Endothelial cell of umbilical vein (primary cell): ENCODE measurements at regions of chr1 and their contacts with region 1.

Region 1: DNA sequence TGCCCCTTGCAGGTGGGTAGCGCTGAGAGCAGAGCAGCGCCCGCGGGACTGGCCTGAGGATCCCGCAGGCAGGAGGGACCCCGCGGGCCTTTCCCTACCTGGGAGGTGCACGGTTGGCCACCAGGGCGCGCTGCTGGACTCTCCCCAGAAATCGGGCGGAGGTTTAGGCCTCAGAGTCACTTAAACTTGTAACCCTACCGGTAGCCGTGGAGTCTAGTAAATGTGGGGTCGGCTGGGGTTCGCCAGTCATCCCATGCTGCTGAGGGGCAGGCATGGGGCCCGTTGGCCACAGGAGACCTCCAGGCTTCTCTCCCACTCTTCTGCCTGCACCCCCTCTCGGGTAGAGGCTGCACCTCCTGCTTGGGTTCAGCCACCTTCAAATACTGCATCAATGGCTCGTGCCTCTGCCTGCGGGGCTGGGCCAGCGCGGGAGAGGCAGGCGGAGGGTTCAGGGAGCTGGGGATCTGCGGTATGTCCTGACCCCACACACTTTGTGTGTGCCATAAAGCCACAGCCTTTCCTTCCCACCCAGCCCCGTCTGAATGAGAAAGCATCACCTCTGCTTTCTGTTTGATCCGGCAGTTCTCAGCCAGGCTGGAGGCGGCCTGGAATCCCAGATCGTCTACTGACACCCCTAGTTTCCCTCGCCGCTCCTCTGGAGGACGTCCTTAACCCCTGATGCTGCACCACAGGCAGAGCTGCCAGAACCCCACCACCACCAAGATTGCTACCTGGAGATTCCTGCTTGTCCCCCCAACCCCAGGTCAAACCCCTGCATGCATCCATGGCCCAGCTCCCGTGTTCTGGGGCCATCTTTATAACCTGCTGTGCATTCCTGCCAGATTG is 12.3 kb upstream of the GSTM4 start:
- DNase-seq: peak; percentile 63
- H3K4me3 ChIP-seq: no peak overlapping the region
- H3K27ac ChIP-seq: no peak overlapping the region
- H3K4me1 ChIP-seq: no peaks in the 10 kb centered on the region
- H3K27me3 ChIP-seq: no peaks in the 10 kb centered on the region
- CTCF ChIP-seq: peak; percentile 86 to 97
- POLR2A ChIP-seq: no peak

Region 2: GRCh38 chr1:109539676-109540075 is 103.9 kb before region 1 on chr1 and contains the start of gene GPR61:
- CTCF ChIA-PET with region 1: interaction called, 565 read pairs
- POLR2A ChIA-PET with region 1: no interaction called
- dilution Hi-C with region 1: no loop called
- intact Hi-C with region 1: no loop called
- DNase-seq: no peak
- H3K4me3 ChIP-seq: no peak within 1 kb of the TSS
- H3K27ac ChIP-seq: no peak within 1 kb of the TSS
- H3K4me1 ChIP-seq: no peaks in the 10 kb centered on the region
- H3K27me3 ChIP-seq: no peaks in the 10 kb centered on the region
- CTCF ChIP-seq: no peak
- POLR2A ChIP-seq: no peak
- total RNA-seq, gene GPR61: not detected in 2 replicates

Region 3: GRCh38 chr1:109598655-109599054 is 45.0 kb before region 1 on chr1:
- CTCF ChIA-PET with region 1: interaction called, 16 read pairs
- POLR2A ChIA-PET with region 1: no interaction called
- dilution Hi-C with region 1: no loop called
- intact Hi-C with region 1: no loop called
- DNase-seq: no peak
- H3K4me3 ChIP-seq: no peak overlapping the region
- H3K27ac ChIP-seq: no peak overlapping the region
- H3K4me1 ChIP-seq: peaks cover 15% of the 10 kb centered on the region
- H3K27me3 ChIP-seq: no peaks in the 10 kb centered on the region
- CTCF ChIP-seq: peak in 1 of 2 donors; percentile 20
- POLR2A ChIP-seq: no peak

Region 4: GRCh38 chr1:109655601-109656519 is 12.3 kb after region 1 on chr1 and contains the start of gene GSTM4:
- CTCF ChIA-PET with region 1: interaction called, 144 read pairs
- POLR2A ChIA-PET with region 1: no interaction called
- dilution Hi-C with region 1: no loop called
- intact Hi-C with region 1: no loop called
- DNase-seq: peak; percentile 69
- H3K4me3 ChIP-seq: peak within 1 kb of the TSS; percentile 57 to 68 (median 59)
- H3K27ac ChIP-seq: no peak within 1 kb of the TSS
- H3K4me1 ChIP-seq: peaks cover 9% of the 10 kb centered on the region
- H3K27me3 ChIP-seq: peaks cover 13 to 16% of the 10 kb centered on the region in 2 experiments
- CTCF ChIP-seq: no peak
- POLR2A ChIP-seq: no peak
- total RNA-seq, gene GSTM4: 5.5 and 9.5 TPM in 2 replicates

Region 5: GRCh38 chr1:109697088-109697487 is 53.5 kb after region 1 on chr1:
- CTCF ChIA-PET with region 1: no interaction called
- POLR2A ChIA-PET with region 1: no interaction called
- dilution Hi-C with region 1: no loop called
- intact Hi-C with region 1: no loop called
- DNase-seq: no peak
- H3K4me3 ChIP-seq: no peak overlapping the region
- H3K27ac ChIP-seq: no peak overlapping the region
- H3K4me1 ChIP-seq: no peaks in the 10 kb centered on the region
- H3K27me3 ChIP-seq: no peaks in the 10 kb centered on the region
- CTCF ChIP-seq: no peak
- POLR2A ChIP-seq: no peak

Region 6: DNA sequence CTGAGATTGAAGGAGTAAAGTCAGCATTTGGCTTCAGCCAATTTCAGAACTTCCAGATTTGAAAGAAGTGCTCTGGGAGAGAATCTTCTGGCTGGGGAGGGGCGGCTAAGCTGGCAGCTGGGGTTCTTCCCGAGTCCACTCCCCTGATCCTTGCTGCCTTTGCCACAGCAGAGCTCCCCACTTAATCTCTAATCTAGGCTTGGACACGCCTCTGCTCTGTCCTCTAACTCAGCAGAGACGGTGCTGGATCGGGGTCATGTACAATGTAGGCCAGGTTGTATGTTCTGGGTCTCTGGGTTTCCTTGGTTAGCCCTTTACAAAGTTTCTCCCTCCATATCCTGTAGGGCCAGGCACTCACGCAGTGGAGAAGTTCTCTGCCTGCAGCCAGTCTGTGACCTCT is 107.3 kb after region 1 on chr1:
- CTCF ChIA-PET with region 1: interaction called, 12 read pairs
- POLR2A ChIA-PET with region 1: no interaction called
- dilution Hi-C with region 1: no loop called
- intact Hi-C with region 1: no loop called
- DNase-seq: no peak
- H3K4me3 ChIP-seq: no peak overlapping the region
- H3K27ac ChIP-seq: no peak overlapping the region
- H3K4me1 ChIP-seq: no peaks in the 10 kb centered on the region
- H3K27me3 ChIP-seq: peaks cover 14 to 22% of the 10 kb centered on the region in 2 experiments
- CTCF ChIP-seq: no peak
- POLR2A ChIP-seq: no peak

Region 7: DNA sequence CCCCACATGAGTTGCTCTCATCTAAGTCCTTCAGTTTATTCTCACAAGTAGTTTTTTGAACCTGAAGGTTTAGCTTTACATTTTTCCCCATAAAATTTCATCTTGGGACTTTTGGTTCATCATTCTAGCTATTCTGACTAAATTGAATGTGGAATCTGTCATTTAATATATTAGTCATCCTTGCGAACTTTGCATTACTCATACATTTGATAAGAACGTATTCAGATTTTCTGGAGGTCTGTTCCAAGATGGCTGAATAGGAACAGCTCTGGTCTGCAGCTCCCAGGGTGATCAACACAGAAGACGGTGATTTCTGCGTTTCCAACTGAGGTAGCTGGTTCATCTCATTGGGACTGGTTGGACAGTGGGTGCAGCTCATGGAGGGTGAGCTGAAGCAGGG is 207.2 kb after region 1 on chr1:
- CTCF ChIA-PET with region 1: no interaction called
- POLR2A ChIA-PET with region 1: no interaction called
- dilution Hi-C with region 1: no loop called
- intact Hi-C with region 1: no loop called
- DNase-seq: no peak
- H3K4me3 ChIP-seq: no peak overlapping the region
- H3K27ac ChIP-seq: no peak overlapping the region
- H3K4me1 ChIP-seq: peaks cover 12% of the 10 kb centered on the region
- H3K27me3 ChIP-seq: no peaks in the 10 kb centered on the region
- CTCF ChIP-seq: no peak
- POLR2A ChIP-seq: no peak

Region 8: GRCh38 chr1:109984456-109985275 is 341.1 kb after region 1 on chr1 and contains the start of gene AHCYL1:
- CTCF ChIA-PET with region 1: interaction called, 83 read pairs
- POLR2A ChIA-PET with region 1: interaction called, 4 read pairs
- dilution Hi-C with region 1: no loop called
- intact Hi-C with region 1: loop called (anchors 1 kb)
- DNase-seq: peak; percentile 98
- H3K4me3 ChIP-seq: peak within 1 kb of the TSS; percentile 87 to 94 (median 91)
- H3K27ac ChIP-seq: peak within 1 kb of the TSS; percentile 95
- H3K4me1 ChIP-seq: peaks cover 31% of the 10 kb centered on the region
- H3K27me3 ChIP-seq: no peaks in the 10 kb centered on the region
- CTCF ChIP-seq: peak; percentile 97 to 98
- POLR2A ChIP-seq: peak; percentile 50
- total RNA-seq, gene AHCYL1: 64.3 and 74.2 TPM in 2 replicates